ENCODE measurements at regions of chr7 and their contacts with region 1.

Region 1: GRCh38 chr7:12686894-12687717 is at the start of gene ARL4A:
- DNase-seq: peak; percentile 100
- H3K4me3 Mint-ChIP-seq: peak within 1 kb of the TSS; percentile 87
- H3K27ac Mint-ChIP-seq: peak within 1 kb of the TSS; percentile 89
- H3K4me1 Mint-ChIP-seq: no peaks in the 10 kb centered on the region
- H3K27me3 Mint-ChIP-seq: no peaks in the 10 kb centered on the region
- CTCF ChIP-seq: peak; percentile 57
- total RNA-seq, gene ARL4A: 30.7 and 42.6 TPM in 2 replicates

Region 2: GRCh38 chr7:12267542-12267941 is 419.6 kb before region 1 on chr7:
- CTCF ChIA-PET with region 1: no interaction called
- POLR2A ChIA-PET with region 1: no interaction called
- intact Hi-C with region 1: no loop called
- DNase-seq: no peak
- H3K4me3 Mint-ChIP-seq: no peak overlapping the region
- H3K27ac Mint-ChIP-seq: no peak overlapping the region
- H3K4me1 Mint-ChIP-seq: no peaks in the 10 kb centered on the region
- H3K27me3 Mint-ChIP-seq: no peaks in the 10 kb centered on the region
- CTCF ChIP-seq: no peak

Region 3: GRCh38 chr7:12369756-12370155 is 317.4 kb before region 1 on chr7:
- CTCF ChIA-PET with region 1: no interaction called
- POLR2A ChIA-PET with region 1: no interaction called
- intact Hi-C with region 1: no loop called
- DNase-seq: no peak
- H3K4me3 Mint-ChIP-seq: no peak overlapping the region
- H3K27ac Mint-ChIP-seq: no peak overlapping the region
- H3K4me1 Mint-ChIP-seq: no peaks in the 10 kb centered on the region
- H3K27me3 Mint-ChIP-seq: peaks cover 13% of the 10 kb centered on the region
- CTCF ChIP-seq: no peak

Region 4: GRCh38 chr7:12674849-12675248 is 12.3 kb before region 1 on chr7:
- CTCF ChIA-PET with region 1: interaction called, 10 read pairs
- POLR2A ChIA-PET with region 1: interaction called, 3 read pairs
- intact Hi-C with region 1: no loop called
- DNase-seq: peak; percentile 71
- H3K4me3 Mint-ChIP-seq: no peak overlapping the region
- H3K27ac Mint-ChIP-seq: no peak overlapping the region
- H3K4me1 Mint-ChIP-seq: peaks cover 6% of the 10 kb centered on the region
- H3K27me3 Mint-ChIP-seq: no peaks in the 10 kb centered on the region
- CTCF ChIP-seq: no peak

Region 5: GRCh38 chr7:12729112-12729511 is 42.0 kb after region 1 on chr7:
- CTCF ChIA-PET with region 1: interaction called, 10 read pairs
- POLR2A ChIA-PET with region 1: interaction called, 19 read pairs
- intact Hi-C with region 1: loop called (anchors 1 kb)
- DNase-seq: peak; percentile 73
- H3K4me3 Mint-ChIP-seq: peak overlapping the region; percentile 38
- H3K27ac Mint-ChIP-seq: peak overlapping the region; percentile 40
- H3K4me1 Mint-ChIP-seq: peaks cover 30% of the 10 kb centered on the region
- H3K27me3 Mint-ChIP-seq: no peaks in the 10 kb centered on the region
- CTCF ChIP-seq: no peak

Region 6: DNA sequence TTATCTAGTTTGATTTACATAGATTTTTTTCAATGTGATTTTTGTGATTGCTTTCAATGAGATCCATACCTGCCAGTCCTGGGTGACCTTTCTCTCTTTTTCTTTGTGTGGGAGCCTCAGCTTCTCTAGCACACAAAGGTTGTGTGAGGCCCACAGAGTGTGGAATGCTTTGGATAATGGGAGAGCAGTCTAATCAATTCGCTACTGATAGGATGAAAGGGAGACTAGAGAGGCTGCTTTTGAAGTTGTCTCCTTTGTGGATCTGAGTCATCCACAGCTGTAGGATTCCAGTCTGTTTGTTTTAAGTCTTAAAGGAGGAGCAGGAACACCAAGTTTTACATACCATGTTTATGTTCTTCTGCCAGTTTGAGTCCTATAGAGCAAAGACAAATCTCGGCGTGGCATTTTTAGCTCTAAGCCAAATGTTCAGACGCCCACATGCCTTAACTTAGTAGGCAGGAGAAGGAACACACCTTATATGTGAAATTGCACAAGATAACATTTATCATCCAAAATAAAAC is 330.3 kb after region 1 on chr7:
- CTCF ChIA-PET with region 1: interaction called, 6 read pairs
- POLR2A ChIA-PET with region 1: interaction called, 39 read pairs
- intact Hi-C with region 1: loop called (anchors 5 kb)
- DNase-seq: peak; percentile 83
- H3K4me3 Mint-ChIP-seq: peak overlapping the region; percentile 44
- H3K27ac Mint-ChIP-seq: peak overlapping the region; percentile 65
- H3K4me1 Mint-ChIP-seq: peaks cover 8% of the 10 kb centered on the region
- H3K27me3 Mint-ChIP-seq: no peaks in the 10 kb centered on the region
- CTCF ChIP-seq: no peak

Region 7: DNA sequence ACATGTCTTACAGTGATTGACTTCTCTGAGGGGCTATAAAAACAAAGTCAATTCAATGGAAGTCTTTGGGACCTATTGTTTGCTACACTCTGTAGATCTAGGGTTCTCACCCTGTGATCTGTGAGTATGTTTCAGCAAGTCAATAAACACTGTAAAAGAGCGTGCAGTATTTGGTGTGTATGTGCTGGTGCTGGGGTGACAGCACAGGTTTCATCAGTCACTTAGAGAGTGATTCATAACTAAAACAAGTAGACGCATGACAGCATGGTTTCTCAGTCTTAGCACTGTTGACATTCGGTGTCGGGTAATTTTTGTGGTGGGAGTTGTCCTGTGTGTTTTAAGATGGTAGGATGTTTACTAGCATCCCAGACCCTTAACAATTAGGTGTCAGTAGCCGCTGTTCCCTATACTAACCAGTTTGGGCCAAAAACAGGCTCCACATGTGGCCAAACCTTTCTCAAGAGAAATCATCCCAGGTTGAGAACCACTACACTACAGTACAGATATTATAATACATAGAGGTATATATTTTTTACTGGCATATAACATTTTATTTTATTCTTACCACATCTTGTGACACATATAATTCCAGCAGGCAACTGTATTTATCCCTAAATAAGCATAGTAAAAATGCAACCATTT is 412.2 kb after region 1 on chr7:
- CTCF ChIA-PET with region 1: interaction called, 3 read pairs
- POLR2A ChIA-PET with region 1: interaction called, 3 read pairs
- intact Hi-C with region 1: loop called (anchors 5 kb)
- DNase-seq: peak; percentile 71
- H3K4me3 Mint-ChIP-seq: no peak overlapping the region
- H3K27ac Mint-ChIP-seq: peak overlapping the region; percentile 79
- H3K4me1 Mint-ChIP-seq: peaks cover 8% of the 10 kb centered on the region
- H3K27me3 Mint-ChIP-seq: no peaks in the 10 kb centered on the region
- CTCF ChIP-seq: no peak

Region 8: GRCh38 chr7:13257661-13258060 is 570.6 kb after region 1 on chr7:
- CTCF ChIA-PET with region 1: interaction called, 139 read pairs
- POLR2A ChIA-PET with region 1: interaction called, 21 read pairs
- intact Hi-C with region 1: no loop called
- DNase-seq: no peak
- H3K4me3 Mint-ChIP-seq: no peak overlapping the region
- H3K27ac Mint-ChIP-seq: no peak overlapping the region
- H3K4me1 Mint-ChIP-seq: no peaks in the 10 kb centered on the region
- H3K27me3 Mint-ChIP-seq: no peaks in the 10 kb centered on the region
- CTCF ChIP-seq: no peak

Measured in MCF 10A (cell line).